Sciatic nerve (tissue), 2 donors: ENCODE measurements at regions of chr16 and their contacts with region 1.

Region 1: DNA sequence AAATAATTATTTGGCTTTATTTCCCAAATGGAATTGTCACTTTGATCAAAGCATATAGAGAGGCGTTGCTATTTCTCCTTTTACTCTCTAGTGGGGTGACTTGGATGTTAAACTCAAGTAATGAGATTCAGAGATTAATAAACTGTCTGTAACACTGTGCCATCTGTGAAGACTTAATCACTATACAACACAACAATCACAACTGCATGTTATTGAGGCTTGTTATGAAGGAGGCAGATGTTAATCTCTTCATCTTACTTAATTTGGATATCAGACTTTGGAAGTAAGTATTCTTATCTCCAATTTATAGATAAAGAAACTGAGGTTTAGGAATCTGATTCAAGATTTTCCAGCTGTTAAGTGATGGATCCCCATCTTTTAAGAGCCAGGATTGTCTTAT is 132.5 kb downstream of the CNTNAP4 start:
- DNase-seq: no peak
- ATAC-seq: no peak

Region 2: DNA sequence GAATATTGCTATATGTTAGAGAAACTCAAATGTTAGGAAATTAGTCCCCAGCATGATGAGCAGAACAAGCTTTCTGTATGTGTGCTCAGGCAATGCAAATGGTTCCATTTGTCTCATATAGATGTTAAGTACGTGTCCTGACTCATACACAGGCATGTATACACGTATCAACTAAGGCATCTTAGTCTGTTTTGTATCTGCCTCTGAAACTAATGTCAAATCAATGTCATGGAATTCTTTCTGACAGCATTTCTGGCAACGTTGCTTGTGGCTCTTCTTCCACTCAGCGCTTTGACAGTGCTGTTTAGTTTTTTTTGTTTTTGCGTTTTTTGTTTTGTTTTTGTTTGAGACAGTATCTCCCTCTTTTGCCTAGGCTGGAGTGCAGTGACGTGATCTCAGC is 20.6 kb before region 1 on chr16:
- intact Hi-C with region 1: no loop called
- DNase-seq: no peak
- ATAC-seq: no peak

Region 3: DNA sequence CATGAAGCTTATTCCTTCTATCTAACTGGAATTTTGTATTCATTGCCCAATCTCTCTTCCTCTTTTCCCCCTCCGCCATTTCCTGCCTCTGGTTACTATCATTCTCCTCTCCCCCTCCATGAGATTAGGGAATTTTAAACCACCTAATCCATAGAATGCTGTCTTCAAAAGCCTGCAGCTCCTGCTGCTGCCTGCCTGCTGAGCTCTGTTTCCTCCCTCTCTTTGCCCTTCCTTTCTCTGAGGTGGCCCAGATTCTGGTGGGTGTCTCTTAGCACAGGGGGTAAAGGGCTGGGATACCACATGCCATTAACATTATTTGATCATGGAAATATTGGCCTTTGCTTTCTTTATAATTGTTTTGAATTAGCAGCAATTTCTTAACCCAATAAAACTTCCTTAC is 109.1 kb after region 1 on chr16:
- intact Hi-C with region 1: loop called (anchors 5 kb)
- DNase-seq: no peak
- ATAC-seq: no peak